PC-3 (cell line): ENCODE measurements at regions of chrX and their contacts with region 1.

Region 1: DNA sequence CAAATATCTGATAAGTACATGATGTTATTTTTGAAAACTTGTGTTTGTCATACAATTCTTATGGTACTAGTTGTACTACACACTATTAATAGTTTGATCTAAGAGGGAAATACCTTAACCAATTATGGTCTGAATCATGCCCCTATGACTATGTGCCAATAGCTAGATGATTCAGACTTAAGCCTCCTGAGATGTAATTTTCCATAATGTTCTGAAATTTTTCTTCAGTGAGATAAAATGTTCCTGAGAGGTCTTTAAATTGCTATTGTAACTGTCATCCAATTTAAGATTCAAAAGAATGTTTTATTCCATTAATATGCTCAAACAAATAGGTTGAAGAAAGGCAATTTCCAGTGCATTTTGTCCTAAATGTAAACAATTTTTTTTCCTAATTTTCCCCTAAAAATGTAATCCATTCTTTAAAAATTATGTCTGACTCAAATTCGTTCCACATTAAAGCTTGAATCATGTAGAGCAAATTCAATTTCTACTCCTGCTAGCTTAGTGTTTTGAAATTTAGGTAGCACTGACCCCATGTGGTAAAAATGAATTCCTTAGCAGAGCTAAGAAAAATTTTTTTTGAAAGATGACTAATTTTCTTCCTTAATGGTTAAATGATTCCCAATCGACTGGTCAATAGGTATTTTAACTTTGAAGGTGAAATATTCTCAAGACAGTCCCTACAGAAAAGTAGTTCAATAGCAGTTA is 49.1 kb downstream of the APOOL start:
- DNase-seq: peak; percentile 68
- ATAC-seq: peak; percentile 76
- H3K4me3 ChIP-seq: no peak overlapping the region
- H3K27ac ChIP-seq: peak overlapping the region; percentile 65
- H3K4me1 ChIP-seq: peaks cover 15% of the 10 kb centered on the region
- H3K27me3 ChIP-seq: no peaks in the 10 kb centered on the region
- CTCF ChIP-seq: peak; percentile 52

Region 2: DNA sequence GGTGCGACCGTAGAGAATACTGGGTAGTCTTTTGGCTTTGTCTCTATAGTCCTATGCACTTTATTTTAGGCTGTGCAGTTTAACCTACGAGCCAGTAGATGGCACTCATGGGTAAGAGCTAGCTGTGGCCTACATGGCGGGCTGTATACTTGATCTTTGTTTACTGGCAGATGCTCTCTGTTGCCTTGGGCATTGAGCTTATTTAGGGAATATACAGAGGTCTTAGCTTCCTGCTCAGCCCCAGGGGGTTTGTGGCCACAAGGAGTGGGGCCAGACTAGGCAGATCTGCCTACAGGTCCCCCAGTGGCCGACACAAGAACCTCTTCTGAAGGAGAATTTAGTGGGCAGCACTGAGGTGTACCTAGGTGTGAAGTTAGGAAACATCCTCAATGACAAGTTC is 323.0 kb before region 1 on chrX:
- CTCF ChIA-PET with region 1: interaction called, 4 read pairs
- POLR2A ChIA-PET with region 1: no interaction called
- intact Hi-C with region 1: loop called (anchors 1 kb)
- DNase-seq: peak; percentile 42
- ATAC-seq: peak; percentile 97
- H3K4me3 ChIP-seq: no peak overlapping the region
- H3K27ac ChIP-seq: no peak overlapping the region
- H3K4me1 ChIP-seq: no peaks in the 10 kb centered on the region
- H3K27me3 ChIP-seq: no peaks in the 10 kb centered on the region
- CTCF ChIP-seq: peak; percentile 85

Region 3: GRCh38 chrX:85140964-85141363 is 88.2 kb after region 1 on chrX:
- CTCF ChIA-PET with region 1: no interaction called
- POLR2A ChIA-PET with region 1: no interaction called
- intact Hi-C with region 1: no loop called
- DNase-seq: no peak
- ATAC-seq: no peak
- H3K4me3 ChIP-seq: no peak overlapping the region
- H3K27ac ChIP-seq: no peak overlapping the region
- H3K4me1 ChIP-seq: no peaks in the 10 kb centered on the region
- H3K27me3 ChIP-seq: no peaks in the 10 kb centered on the region
- CTCF ChIP-seq: no peak